ENCODE measurements at regions of chr2 and their contacts with region 1.

Region 1: GRCh38 chr2:112310906-112311305 is 35.5 kb downstream of the ZC3H6 start:
- DNase-seq: no peak
- ATAC-seq: no peak
- H3K4me3 Mint-ChIP-seq: no peak overlapping the region
- H3K27ac Mint-ChIP-seq: no peak overlapping the region
- H3K4me1 Mint-ChIP-seq: no peaks in the 10 kb centered on the region
- H3K27me3 Mint-ChIP-seq: no peaks in the 10 kb centered on the region
- CTCF ChIP-seq: no peak

Region 2: GRCh38 chr2:112259509-112260294 is 51.2 kb before region 1 on chr2:
- CTCF ChIA-PET with region 1: interaction called, 11 read pairs
- POLR2A ChIA-PET with region 1: interaction called, 3 read pairs
- intact Hi-C with region 1: no loop called
- DNase-seq: peak; percentile 92
- ATAC-seq: peak; percentile 48
- H3K4me3 Mint-ChIP-seq: peak overlapping the region; percentile 55
- H3K27ac Mint-ChIP-seq: peak overlapping the region; percentile 58
- H3K4me1 Mint-ChIP-seq: peaks cover 21% of the 10 kb centered on the region
- H3K27me3 Mint-ChIP-seq: peaks cover 1% of the 10 kb centered on the region
- CTCF ChIP-seq: peak; percentile 92

Region 3: GRCh38 chr2:112290088-112290487 is 20.8 kb before region 1 on chr2:
- CTCF ChIA-PET with region 1: no interaction called
- POLR2A ChIA-PET with region 1: no interaction called
- intact Hi-C with region 1: no loop called
- DNase-seq: no peak
- ATAC-seq: no peak
- H3K4me3 Mint-ChIP-seq: no peak overlapping the region
- H3K27ac Mint-ChIP-seq: no peak overlapping the region
- H3K4me1 Mint-ChIP-seq: peaks cover 3% of the 10 kb centered on the region
- H3K27me3 Mint-ChIP-seq: no peaks in the 10 kb centered on the region
- CTCF ChIP-seq: no peak

Region 4: DNA sequence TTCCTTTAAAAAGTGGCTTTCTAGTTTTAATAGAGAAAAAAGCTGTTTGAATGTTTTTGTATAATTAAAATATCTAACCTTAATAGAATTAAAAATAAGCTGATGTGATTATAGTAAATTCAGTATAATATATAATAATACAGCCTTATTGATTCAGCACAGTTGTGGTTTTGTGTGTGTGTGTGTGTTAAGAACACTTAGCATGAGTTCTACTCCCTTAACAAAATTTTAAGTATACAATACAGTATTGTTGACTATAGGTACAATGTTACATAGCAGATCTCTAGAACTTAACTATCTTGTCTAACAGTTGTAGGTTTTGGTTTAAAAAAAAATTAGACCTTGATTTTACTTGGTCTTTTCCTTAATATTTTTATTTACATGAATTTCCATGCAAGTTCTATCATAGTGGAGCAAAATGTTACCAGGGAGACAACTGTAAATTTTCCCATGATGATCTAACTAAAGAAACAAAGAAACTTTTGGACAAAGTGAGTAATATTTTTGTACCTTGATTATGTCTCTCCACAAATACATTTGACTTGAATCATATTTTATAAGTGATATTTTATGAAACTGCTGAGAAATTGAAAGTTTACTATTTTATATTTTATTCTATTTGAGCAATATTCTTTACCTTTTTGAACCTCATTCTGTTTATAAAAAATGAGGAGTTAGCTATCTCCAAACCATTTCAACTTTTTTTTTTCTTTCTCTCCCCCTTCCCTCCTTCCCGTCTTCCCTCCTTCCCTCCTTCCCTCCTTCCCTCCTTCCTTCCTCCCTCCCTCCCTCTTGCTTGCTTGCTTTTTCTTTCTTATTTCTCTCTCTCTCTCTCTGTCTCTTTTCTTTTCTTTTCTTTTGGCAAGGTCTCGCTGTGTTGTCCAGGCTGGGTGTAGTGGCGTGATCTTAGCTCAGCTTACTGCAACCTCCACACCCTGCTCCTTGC is 10.7 kb after region 1 on chr2:
- CTCF ChIA-PET with region 1: no interaction called
- POLR2A ChIA-PET with region 1: no interaction called
- intact Hi-C with region 1: no loop called
- DNase-seq: no peak
- ATAC-seq: no peak
- H3K4me3 Mint-ChIP-seq: no peak overlapping the region
- H3K27ac Mint-ChIP-seq: no peak overlapping the region
- H3K4me1 Mint-ChIP-seq: no peaks in the 10 kb centered on the region
- H3K27me3 Mint-ChIP-seq: no peaks in the 10 kb centered on the region
- CTCF ChIP-seq: no peak